Endothelial cell of umbilical vein (primary cell): ENCODE measurements at regions of chr1 and their contacts with region 1.

Region 1: DNA sequence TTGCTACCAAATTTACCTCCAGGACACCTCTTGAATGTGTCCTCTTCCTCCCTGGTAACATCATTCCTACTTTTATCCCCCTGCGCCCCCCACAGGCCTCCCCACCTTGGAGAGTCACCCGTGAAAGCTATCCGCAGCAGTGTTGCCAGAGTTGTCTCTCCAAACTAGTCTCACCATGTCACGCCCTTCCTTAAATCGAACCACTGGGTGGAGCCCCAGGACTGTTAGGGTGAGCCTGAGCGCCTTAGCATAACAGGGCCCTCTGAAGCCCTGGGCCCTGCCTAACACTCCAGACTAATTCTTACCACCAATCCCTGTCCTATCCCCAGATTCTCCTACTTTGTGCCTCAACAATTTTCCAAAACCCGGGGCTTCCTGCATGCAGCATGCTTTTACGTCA is 35.0 kb downstream of the HSD3B2 start:
- DNase-seq: no peak
- H3K4me3 ChIP-seq: no peak overlapping the region
- H3K27ac ChIP-seq: no peak overlapping the region
- H3K4me1 ChIP-seq: no peaks in the 10 kb centered on the region
- H3K27me3 ChIP-seq: no peaks in the 10 kb centered on the region
- CTCF ChIP-seq: no peak
- POLR2A ChIP-seq: no peak

Region 2: GRCh38 chr1:119483441-119484200 is 33.7 kb after region 1 on chr1:
- CTCF ChIA-PET with region 1: no interaction called
- POLR2A ChIA-PET with region 1: no interaction called
- dilution Hi-C with region 1: no loop called
- intact Hi-C with region 1: loop called (anchors 2 kb)
- DNase-seq: no peak
- H3K4me3 ChIP-seq: no peak overlapping the region
- H3K27ac ChIP-seq: no peak overlapping the region
- H3K4me1 ChIP-seq: no peaks in the 10 kb centered on the region
- H3K27me3 ChIP-seq: no peaks in the 10 kb centered on the region
- CTCF ChIP-seq: no peak
- POLR2A ChIP-seq: no peak